ENCODE measurements at regions of chr16 and their contacts with region 1.

Region 1: GRCh38 chr16:85305996-85306792 is 193.9 kb upstream of the CIBAR2 start:
- DNase-seq: peak; percentile 90 to 96 (median 95)
- H3K4me3 ChIP-seq: no peak overlapping the region
- H3K27ac ChIP-seq: peak overlapping the region in 1 of 2 experiments; percentile 76
- H3K4me1 ChIP-seq: peaks cover 28 to 84% (median 83%) of the 10 kb centered on the region in 4 experiments
- H3K27me3 ChIP-seq: no peaks in the 10 kb centered on the region

Region 2: DNA sequence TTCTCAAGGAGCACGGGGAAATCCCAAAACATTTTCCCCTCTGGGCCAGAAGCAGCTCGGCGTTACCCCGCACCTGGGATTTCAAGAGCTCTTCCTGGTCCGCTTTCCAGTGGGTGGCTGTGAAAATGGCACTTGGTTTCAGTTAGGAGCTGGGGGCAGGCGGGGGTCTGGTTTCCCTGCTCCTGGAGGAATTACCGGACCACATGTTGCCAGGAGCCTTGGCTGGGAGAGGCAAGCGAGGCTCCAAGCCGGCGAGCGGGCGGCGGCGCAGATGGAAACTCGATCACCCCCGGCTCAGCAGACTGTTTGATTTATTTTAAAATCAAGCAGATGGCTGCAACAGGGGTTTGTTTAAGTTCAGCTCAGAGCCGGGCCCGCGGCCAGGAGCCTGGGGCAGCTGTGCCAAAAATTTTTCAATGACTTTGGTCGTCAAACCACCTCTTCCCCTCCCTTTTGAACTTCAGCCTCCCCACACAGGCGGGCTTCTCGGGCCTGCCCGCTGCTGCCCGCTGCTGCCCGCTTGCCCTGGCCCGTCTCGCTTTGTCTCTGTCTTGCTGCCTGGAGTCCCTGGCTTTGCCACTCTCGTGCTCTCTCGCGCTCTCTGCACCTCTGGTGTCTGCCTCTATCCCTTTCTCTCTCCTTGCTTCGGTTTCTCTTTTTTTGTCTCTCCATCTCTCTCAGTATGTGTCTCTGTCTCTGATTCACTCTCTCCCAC is 85.9 kb before region 1 on chr16:
- CTCF ChIA-PET with region 1: no interaction called
- POLR2A ChIA-PET with region 1: no interaction called
- DNase-seq: no peak
- H3K4me3 ChIP-seq: no peak overlapping the region
- H3K27ac ChIP-seq: no peak overlapping the region
- H3K4me1 ChIP-seq: peaks cover 0 to 3% (median 0%) of the 10 kb centered on the region in 4 experiments
- H3K27me3 ChIP-seq: no peaks in the 10 kb centered on the region

Region 3: GRCh38 chr16:85234310-85235204 is 71.6 kb before region 1 on chr16:
- CTCF ChIA-PET with region 1: no interaction called
- POLR2A ChIA-PET with region 1: no interaction called
- DNase-seq: no peak
- H3K4me3 ChIP-seq: peak overlapping the region in 2 of 7 experiments; percentile 2 to 13
- H3K27ac ChIP-seq: no peak overlapping the region
- H3K4me1 ChIP-seq: peaks cover 0 to 33% (median 23%) of the 10 kb centered on the region in 4 experiments
- H3K27me3 ChIP-seq: no peaks in the 10 kb centered on the region

Region 4: DNA sequence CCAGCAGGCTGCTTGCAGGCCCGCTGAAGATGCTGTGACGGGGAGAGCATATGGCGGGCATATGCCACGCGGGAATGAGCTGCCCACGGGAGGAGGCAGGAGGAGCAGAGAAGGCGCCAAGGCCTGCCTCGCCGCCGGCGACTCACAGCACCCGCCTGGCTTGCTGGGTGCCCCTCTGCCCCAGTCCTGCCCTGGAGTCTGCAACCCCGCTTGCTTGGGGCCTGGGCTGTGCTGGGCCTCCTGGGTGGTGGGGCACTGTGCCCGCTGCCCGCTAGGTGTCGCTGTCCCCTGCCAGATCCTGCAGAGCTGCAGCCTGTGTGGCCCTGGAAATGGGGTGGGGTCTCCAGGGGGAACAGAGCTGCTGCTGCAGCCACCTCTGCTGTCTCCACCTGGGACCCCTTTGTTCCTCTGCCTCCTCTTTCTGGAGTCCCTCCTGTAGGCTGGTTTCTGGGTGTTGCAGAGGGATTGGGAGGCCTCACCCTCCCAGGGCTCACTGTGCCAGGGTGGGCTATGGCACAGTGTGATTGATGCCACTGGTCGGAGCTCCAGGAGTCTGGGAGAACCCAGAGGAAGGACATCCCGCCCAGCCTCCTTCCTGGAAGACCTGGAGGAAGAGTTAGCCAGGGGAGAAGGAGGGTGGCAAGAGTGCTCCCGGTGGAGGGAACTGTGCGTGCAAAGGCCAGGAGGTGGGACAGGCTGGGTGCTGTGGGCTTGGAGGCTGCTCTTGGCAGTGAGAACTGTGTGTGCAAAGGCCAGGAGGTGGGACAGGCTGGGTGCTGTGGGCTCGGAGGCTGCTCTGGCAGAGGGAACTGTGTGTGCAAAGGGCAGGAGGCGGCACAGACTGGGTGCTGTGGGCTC is 52.9 kb before region 1 on chr16:
- CTCF ChIA-PET with region 1: interaction called, 13 read pairs
- POLR2A ChIA-PET with region 1: no interaction called
- DNase-seq: peak; percentile 57 to 86 (median 79)
- H3K4me3 ChIP-seq: no peak overlapping the region
- H3K27ac ChIP-seq: no peak overlapping the region
- H3K4me1 ChIP-seq: peaks cover 0 to 22% (median 15%) of the 10 kb centered on the region in 4 experiments
- H3K27me3 ChIP-seq: no peaks in the 10 kb centered on the region

Region 5: DNA sequence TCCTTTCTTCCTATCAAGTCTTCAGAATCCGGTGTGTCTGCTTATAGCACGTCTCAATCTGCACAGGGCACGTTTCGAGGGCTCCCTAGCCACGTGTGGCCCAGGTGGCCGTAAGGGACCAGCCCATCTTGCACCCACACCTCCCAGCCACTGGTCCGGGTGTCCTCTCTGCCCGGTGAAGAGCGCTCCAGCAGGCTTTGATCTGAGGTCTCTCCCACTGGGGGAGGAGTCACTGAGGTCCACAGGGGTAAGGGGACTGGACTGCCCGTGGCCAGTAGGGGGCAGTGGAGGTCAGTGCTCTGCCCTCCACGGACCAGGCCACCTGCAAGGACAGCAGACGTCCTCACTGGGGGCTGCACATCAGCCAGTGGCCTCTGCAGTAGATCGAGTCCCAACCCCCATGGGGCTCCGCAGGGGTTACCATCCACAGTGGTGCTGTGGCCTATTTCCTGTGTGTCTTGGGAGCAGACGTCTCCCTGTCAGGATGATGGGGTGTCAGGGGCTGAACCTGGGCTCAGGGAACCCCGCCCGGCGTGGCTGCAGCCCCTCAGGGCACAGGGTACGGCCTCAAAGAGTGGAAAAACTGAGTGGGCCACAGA is 10.2 kb after region 1 on chr16:
- CTCF ChIA-PET with region 1: interaction called, 24 read pairs
- POLR2A ChIA-PET with region 1: no interaction called
- DNase-seq: peak; percentile 70 to 84 (median 80)
- H3K4me3 ChIP-seq: no peak overlapping the region
- H3K27ac ChIP-seq: no peak overlapping the region
- H3K4me1 ChIP-seq: peaks cover 3 to 54% (median 42%) of the 10 kb centered on the region in 4 experiments
- H3K27me3 ChIP-seq: no peaks in the 10 kb centered on the region

Region 6: GRCh38 chr16:85321509-85322271 is 15.5 kb after region 1 on chr16:
- CTCF ChIA-PET with region 1: interaction called, 24 read pairs
- POLR2A ChIA-PET with region 1: interaction called, 3 read pairs
- DNase-seq: no peak
- H3K4me3 ChIP-seq: no peak overlapping the region
- H3K27ac ChIP-seq: no peak overlapping the region
- H3K4me1 ChIP-seq: peaks cover 0 to 37% (median 18%) of the 10 kb centered on the region in 4 experiments
- H3K27me3 ChIP-seq: no peaks in the 10 kb centered on the region

Region 7: DNA sequence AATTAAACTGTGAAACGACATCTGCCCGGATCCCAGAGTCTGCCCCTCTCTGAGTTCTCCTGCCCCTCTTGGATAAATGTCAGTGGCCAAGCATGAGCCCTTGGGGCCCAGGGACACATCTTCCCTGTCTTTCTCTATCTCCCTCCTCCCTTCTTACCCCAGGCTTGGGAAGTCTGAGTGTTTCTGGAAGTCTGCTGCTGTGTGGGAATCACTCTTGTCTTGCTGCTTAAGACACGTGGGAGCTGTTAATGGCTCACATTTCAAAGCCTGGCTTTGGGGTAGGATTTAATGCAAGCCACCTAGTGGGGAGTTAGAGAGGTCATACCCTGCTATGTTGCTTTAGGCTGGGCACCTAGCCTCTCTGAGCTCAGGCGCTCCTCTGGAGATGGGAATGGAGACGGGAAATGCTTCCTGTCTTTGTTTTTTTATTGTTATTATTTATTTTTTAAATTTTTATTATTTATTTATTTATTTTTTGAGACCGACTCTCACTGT is 24.5 kb after region 1 on chr16:
- CTCF ChIA-PET with region 1: interaction called, 38 read pairs
- POLR2A ChIA-PET with region 1: interaction called, 6 read pairs
- DNase-seq: peak in 2 of 3 donors; percentile 76 to 78
- H3K4me3 ChIP-seq: no peak overlapping the region
- H3K27ac ChIP-seq: no peak overlapping the region
- H3K4me1 ChIP-seq: peaks cover 0 to 64% (median 59%) of the 10 kb centered on the region in 4 experiments
- H3K27me3 ChIP-seq: no peaks in the 10 kb centered on the region

Region 8: DNA sequence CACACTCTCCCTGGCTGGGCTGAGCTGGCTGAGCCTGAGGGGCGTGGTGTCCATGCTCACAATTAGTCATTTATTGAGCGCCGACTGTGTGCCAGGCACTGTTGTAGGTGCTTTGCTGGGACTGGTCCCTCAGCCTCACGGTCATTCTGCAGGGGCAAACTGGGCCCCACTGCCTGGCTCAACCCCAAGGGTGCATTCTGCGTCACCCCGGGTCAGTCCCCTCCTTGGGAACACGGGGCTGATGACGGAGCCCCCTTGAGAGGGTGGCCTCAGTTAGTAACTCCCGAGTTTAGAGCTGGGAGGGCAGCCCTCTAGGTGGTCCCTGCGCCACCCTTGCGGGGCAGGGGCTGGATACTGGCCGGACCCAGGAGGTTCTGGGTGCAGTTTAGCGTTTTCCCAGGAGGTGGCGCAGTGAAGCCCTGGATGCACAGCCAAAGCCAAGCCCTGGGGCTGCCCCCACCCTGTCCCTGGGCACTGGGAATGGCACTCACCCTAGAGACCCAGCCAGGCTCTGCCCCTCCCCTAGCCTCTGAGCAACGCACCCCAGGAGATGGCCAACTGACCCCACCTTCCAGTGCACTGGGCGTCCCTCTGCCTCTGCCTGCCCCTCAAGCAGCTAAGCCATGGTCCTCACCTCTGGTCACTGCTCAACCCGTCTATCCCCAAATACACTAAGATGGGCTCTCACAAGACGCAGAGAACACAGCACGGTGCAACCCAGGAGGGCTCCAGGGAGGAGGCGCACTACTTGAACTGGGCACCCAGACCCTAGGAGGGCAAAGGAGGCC is 63.7 kb after region 1 on chr16:
- CTCF ChIA-PET with region 1: interaction called, 19 read pairs
- POLR2A ChIA-PET with region 1: no interaction called
- DNase-seq: peak in 1 of 3 donors; percentile 45
- H3K4me3 ChIP-seq: no peak overlapping the region
- H3K27ac ChIP-seq: no peak overlapping the region
- H3K4me1 ChIP-seq: peaks cover 0 to 55% (median 44%) of the 10 kb centered on the region in 4 experiments
- H3K27me3 ChIP-seq: no peaks in the 10 kb centered on the region